ENCODE measurements at regions of chr7 and their contacts with region 1.

Region 1: GRCh38 chr7:50251765-50252164 is 52.8 kb upstream of the IKZF1 start:
- DNase-seq: no peak
- ATAC-seq: no peak
- H3K4me3 ChIP-seq: no peak overlapping the region
- H3K4me3 Mint-ChIP-seq: no peak overlapping the region
- H3K27ac ChIP-seq: no peak overlapping the region
- H3K27ac Mint-ChIP-seq: no peak overlapping the region
- H3K4me1 ChIP-seq: no peaks in the 10 kb centered on the region
- H3K4me1 Mint-ChIP-seq: peaks cover 43% of the 10 kb centered on the region
- H3K27me3 ChIP-seq: no peaks in the 10 kb centered on the region
- H3K27me3 Mint-ChIP-seq: no peaks in the 10 kb centered on the region
- CTCF ChIP-seq: no peak

Region 2: GRCh38 chr7:50221028-50221427 is 30.7 kb before region 1 on chr7:
- CTCF ChIA-PET with region 1: interaction called, 3 read pairs
- POLR2A ChIA-PET with region 1: no interaction called
- intact Hi-C with region 1: loop called in 1 of 2 experiments (anchors 2 kb)
- DNase-seq: peak in 2 of 14 experiments; percentile 46 to 54
- ATAC-seq: no peak
- H3K4me3 ChIP-seq: no peak overlapping the region
- H3K4me3 Mint-ChIP-seq: no peak overlapping the region
- H3K27ac ChIP-seq: no peak overlapping the region
- H3K27ac Mint-ChIP-seq: no peak overlapping the region
- H3K4me1 ChIP-seq: peaks cover 22% of the 10 kb centered on the region
- H3K4me1 Mint-ChIP-seq: peaks cover 30% of the 10 kb centered on the region
- H3K27me3 ChIP-seq: no peaks in the 10 kb centered on the region
- H3K27me3 Mint-ChIP-seq: no peaks in the 10 kb centered on the region
- CTCF ChIP-seq: no peak

Measured in CD4-positive, alpha-beta T cell (primary cell).